B cell (primary cell): ENCODE measurements at regions of chr9 and their contacts with region 1.

Region 1: DNA sequence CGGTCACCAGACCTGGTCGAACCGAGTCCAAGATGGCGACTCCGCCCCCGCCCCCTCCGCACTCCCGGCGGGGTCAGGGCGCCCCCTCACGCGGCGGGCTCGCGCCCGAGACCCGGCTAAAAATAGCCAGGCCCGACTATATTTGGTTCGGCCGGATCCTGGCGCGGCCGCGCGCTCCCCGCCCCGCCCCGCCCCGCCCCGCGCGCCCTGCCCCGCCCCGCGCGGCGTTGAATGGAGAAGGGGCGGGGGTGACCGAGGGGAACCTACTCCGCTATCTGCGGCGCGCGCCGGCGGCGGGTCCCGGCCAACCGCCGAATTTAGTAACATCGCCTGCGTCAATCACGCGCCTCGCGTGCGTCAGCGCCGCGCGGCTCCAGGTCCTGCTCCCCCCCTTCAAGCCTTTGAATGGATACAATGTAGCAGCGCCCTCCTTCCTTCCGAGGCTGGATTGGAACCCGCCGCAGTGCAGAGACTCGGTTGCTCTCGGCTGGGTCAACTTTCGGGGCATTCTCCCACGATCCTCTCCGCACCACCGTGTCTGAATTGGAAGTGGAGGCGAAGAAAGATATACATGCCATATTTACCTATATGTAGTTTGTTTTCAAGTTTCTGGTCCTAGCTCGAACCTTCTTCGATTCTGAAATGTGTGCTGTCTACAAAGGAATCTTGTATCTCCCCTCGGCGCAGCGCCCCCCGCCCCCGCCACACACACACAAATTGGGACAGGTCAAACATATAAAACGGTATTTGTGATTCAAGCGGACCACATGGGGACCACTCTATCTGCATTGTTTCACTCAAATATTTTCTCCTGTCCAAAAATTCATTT is 1.6 kb upstream of the NR4A3 start:
- DNase-seq: peak; percentile 98
- ATAC-seq: peak; percentile 54
- H3K4me3 ChIP-seq: peak overlapping the region; percentile 73 to 100 (median 80)
- H3K4me3 Mint-ChIP-seq: peak overlapping the region; percentile 100
- H3K27ac ChIP-seq: peak overlapping the region; percentile 94 to 98
- H3K27ac Mint-ChIP-seq: peak overlapping the region; percentile 98
- H3K4me1 ChIP-seq: peaks cover 41 to 49% of the 10 kb centered on the region in 2 donors
- H3K4me1 Mint-ChIP-seq: peaks cover 47% of the 10 kb centered on the region
- H3K27me3 ChIP-seq: peaks cover 0 to 33% (median 18%) of the 10 kb centered on the region in 4 experiments
- H3K27me3 Mint-ChIP-seq: peaks cover 10% of the 10 kb centered on the region
- CTCF ChIP-seq: no peak

Region 2: GRCh38 chr9:99162759-99163364 is 657.2 kb before region 1 on chr9:
- CTCF ChIA-PET with region 1: interaction called, 6 read pairs
- POLR2A ChIA-PET with region 1: no interaction called
- intact Hi-C with region 1: loop called (anchors 5 kb)
- DNase-seq: peak; percentile 69
- ATAC-seq: peak; percentile 59
- H3K4me3 ChIP-seq: no peak overlapping the region
- H3K4me3 Mint-ChIP-seq: peak overlapping the region; percentile 27
- H3K27ac ChIP-seq: no peak overlapping the region
- H3K27ac Mint-ChIP-seq: no peak overlapping the region
- H3K4me1 ChIP-seq: peaks cover 8 to 9% of the 10 kb centered on the region in 2 donors
- H3K4me1 Mint-ChIP-seq: peaks cover 37% of the 10 kb centered on the region
- H3K27me3 ChIP-seq: no peaks in the 10 kb centered on the region
- H3K27me3 Mint-ChIP-seq: no peaks in the 10 kb centered on the region
- CTCF ChIP-seq: peak; percentile 82

Region 3: DNA sequence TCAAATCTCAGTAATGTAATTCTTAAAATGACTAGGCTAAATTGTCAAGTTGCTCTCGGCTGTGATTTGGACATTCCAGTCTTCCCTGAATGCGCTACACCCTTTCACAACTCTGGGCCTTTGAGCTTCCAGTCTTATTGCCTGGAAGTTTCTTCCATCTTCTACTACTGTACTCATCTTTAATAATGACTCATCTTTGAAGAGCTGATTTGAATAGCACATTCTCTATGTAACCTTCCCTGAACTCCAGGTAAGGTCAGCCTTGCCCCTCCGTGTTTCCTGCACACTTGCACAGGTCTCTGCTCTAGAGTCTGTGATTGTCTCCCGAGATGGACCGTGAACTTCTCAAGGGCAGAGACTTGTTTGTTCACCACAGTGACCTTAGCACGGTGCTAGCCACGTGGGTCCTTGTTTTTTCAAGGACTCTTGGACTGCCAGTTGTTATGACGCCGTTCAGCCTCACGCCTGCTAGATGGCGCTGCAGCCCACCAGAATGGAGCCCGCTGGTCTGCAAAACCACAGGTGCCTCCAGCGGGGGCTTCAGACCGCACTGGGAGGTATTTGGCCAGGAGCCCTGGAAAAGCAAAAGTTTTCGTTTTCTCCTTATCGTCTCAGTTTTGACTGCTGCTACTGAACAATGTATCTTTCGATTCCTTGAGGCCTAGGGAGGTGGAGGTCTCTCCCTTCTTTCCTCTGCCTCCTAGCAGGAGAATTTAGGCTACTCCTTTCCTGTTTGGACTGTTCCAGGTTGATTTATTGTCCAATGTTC is 553.6 kb before region 1 on chr9:
- CTCF ChIA-PET with region 1: interaction called, 9 read pairs
- POLR2A ChIA-PET with region 1: interaction called, 13 read pairs
- intact Hi-C with region 1: loop called (anchors 10 kb)
- DNase-seq: peak; percentile 81
- ATAC-seq: peak; percentile 74
- H3K4me3 ChIP-seq: peak overlapping the region in 1 of 5 experiments; percentile 3
- H3K4me3 Mint-ChIP-seq: peak overlapping the region; percentile 71
- H3K27ac ChIP-seq: no peak overlapping the region
- H3K27ac Mint-ChIP-seq: peak overlapping the region; percentile 59
- H3K4me1 ChIP-seq: peaks cover 6 to 9% of the 10 kb centered on the region in 2 donors
- H3K4me1 Mint-ChIP-seq: peaks cover 31% of the 10 kb centered on the region
- H3K27me3 ChIP-seq: no peaks in the 10 kb centered on the region
- H3K27me3 Mint-ChIP-seq: peaks cover 3% of the 10 kb centered on the region
- CTCF ChIP-seq: peak; percentile 95

Region 4: GRCh38 chr9:99762470-99762869 is 57.6 kb before region 1 on chr9:
- CTCF ChIA-PET with region 1: no interaction called
- POLR2A ChIA-PET with region 1: no interaction called
- intact Hi-C with region 1: loop called (anchors 1 kb)
- DNase-seq: peak; percentile 70
- ATAC-seq: peak; percentile 96
- H3K4me3 ChIP-seq: peak overlapping the region in 2 of 5 experiments; percentile 12 to 27
- H3K4me3 Mint-ChIP-seq: no peak overlapping the region
- H3K27ac ChIP-seq: peak overlapping the region; percentile 68 to 74
- H3K27ac Mint-ChIP-seq: no peak overlapping the region
- H3K4me1 ChIP-seq: peaks cover 13 to 18% of the 10 kb centered on the region in 2 donors
- H3K4me1 Mint-ChIP-seq: no peaks in the 10 kb centered on the region
- H3K27me3 ChIP-seq: no peaks in the 10 kb centered on the region
- H3K27me3 Mint-ChIP-seq: no peaks in the 10 kb centered on the region
- CTCF ChIP-seq: no peak

Region 5: DNA sequence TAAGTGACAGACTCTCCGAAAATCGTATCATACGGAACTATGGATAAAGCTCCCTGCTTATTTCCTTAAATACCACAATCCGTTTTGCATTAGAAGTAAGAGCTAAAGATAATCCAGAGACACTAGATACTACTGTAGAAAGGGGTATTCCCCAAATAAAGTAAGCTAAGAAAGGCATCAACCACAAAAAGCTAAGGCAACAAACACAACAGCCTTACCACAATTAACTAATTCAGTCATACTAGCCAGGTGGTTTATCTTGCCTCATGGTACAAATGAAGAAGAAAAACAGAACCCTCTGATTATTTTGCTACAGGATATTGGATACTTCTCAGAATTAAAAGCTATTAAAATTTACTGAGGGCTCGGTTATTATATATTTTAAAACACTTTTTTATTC is 264.7 kb after region 1 on chr9:
- CTCF ChIA-PET with region 1: interaction called, 3 read pairs
- POLR2A ChIA-PET with region 1: no interaction called
- intact Hi-C with region 1: loop called (anchors 1 kb)
- DNase-seq: peak; percentile 76
- ATAC-seq: peak; percentile 68
- H3K4me3 ChIP-seq: peak overlapping the region in 3 of 5 experiments; percentile 55 to 68 (median 58)
- H3K4me3 Mint-ChIP-seq: peak overlapping the region; percentile 73
- H3K27ac ChIP-seq: peak overlapping the region; percentile 80 to 86
- H3K27ac Mint-ChIP-seq: peak overlapping the region; percentile 79
- H3K4me1 ChIP-seq: peaks cover 46 to 70% of the 10 kb centered on the region in 2 donors
- H3K4me1 Mint-ChIP-seq: peaks cover 78% of the 10 kb centered on the region
- H3K27me3 ChIP-seq: no peaks in the 10 kb centered on the region
- H3K27me3 Mint-ChIP-seq: no peaks in the 10 kb centered on the region
- CTCF ChIP-seq: no peak

Region 6: GRCh38 chr9:100352727-100353505 is 532.8 kb after region 1 on chr9 and contains the start of gene TEX10:
- CTCF ChIA-PET with region 1: interaction called, 3 read pairs
- POLR2A ChIA-PET with region 1: interaction called, 3 read pairs
- intact Hi-C with region 1: loop called (anchors 10 kb)
- DNase-seq: peak; percentile 93
- ATAC-seq: peak; percentile 93
- H3K4me3 ChIP-seq: peak within 1 kb of the TSS; percentile 53 to 94 (median 92)
- H3K4me3 Mint-ChIP-seq: peak within 1 kb of the TSS; percentile 93
- H3K27ac ChIP-seq: peak within 1 kb of the TSS; percentile 58 to 90
- H3K27ac Mint-ChIP-seq: peak within 1 kb of the TSS; percentile 83
- H3K4me1 ChIP-seq: peaks cover 35% of the 10 kb centered on the region in 2 donors
- H3K4me1 Mint-ChIP-seq: peaks cover 69% of the 10 kb centered on the region
- H3K27me3 ChIP-seq: no peaks in the 10 kb centered on the region
- H3K27me3 Mint-ChIP-seq: no peaks in the 10 kb centered on the region
- CTCF ChIP-seq: no peak
- total RNA-seq, gene TEX10: 24.9 and 27.6 TPM in 2 replicates